ENCODE measurements at regions of chr1 and their contacts with region 1.

Region 1: GRCh38 chr1:229258031-229258756 is 12.7 kb upstream of the RAB4A start:
- DNase-seq: peak; percentile 69 to 85 (median 79)
- H3K4me3 ChIP-seq: peak overlapping the region in 4 of 7 experiments; percentile 5 to 56 (median 23)
- H3K27ac ChIP-seq: no peak overlapping the region
- H3K4me1 ChIP-seq: peaks cover 11 to 20% (median 19%) of the 10 kb centered on the region in 4 experiments
- H3K27me3 ChIP-seq: no peaks in the 10 kb centered on the region

Region 2: GRCh38 chr1:228691926-228692325 is 566.3 kb before region 1 on chr1:
- CTCF ChIA-PET with region 1: interaction called, 23 read pairs
- POLR2A ChIA-PET with region 1: no interaction called
- DNase-seq: peak; percentile 68 to 79 (median 78)
- H3K4me3 ChIP-seq: no peak overlapping the region
- H3K27ac ChIP-seq: no peak overlapping the region
- H3K4me1 ChIP-seq: peaks cover 0 to 2% (median 0%) of the 10 kb centered on the region in 4 experiments
- H3K27me3 ChIP-seq: peaks cover 0 to 6% (median 0%) of the 10 kb centered on the region in 5 experiments

Region 3: DNA sequence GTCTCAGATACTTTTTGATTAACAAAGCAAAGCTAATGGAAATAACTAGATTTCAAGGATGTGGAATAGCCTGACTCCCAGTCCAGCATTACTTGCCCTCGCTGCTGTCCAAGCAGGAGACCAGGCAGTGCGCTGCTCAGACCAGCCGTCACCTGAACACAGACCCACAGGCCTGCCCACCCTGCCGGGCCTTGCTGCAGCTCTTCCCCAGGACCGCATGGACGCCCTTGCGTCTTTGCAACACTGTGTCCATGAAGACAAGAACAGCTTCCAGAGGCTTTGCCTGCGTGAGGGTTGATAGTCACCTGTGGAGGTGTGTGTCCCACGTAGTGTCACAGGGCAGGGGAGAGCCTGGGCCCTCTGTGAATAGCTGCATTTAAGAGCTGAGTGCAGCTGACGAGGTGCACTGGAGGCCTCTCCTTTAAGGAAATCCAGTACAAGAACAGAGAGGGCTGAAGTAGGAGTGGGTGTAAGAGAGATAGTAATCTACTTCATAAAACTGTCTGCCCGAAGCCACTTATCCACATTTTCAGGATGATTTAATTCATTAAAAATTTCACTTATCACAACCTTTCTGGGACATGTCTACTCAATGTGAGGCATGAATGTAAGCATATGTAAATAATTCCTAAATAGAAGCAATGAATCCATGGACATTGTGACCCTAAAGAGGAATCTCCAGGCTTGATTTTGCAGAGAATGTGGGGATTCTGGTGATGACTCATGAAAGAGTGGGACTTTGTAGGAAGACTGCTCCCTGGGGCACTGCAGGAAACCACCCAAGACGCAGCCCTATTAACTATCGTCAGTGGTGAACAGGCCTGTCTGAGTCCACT is 163.5 kb before region 1 on chr1:
- CTCF ChIA-PET with region 1: no interaction called
- POLR2A ChIA-PET with region 1: no interaction called
- DNase-seq: no peak
- H3K4me3 ChIP-seq: no peak overlapping the region
- H3K27ac ChIP-seq: no peak overlapping the region
- H3K4me1 ChIP-seq: no peaks in the 10 kb centered on the region
- H3K27me3 ChIP-seq: peaks cover 0 to 2% (median 0%) of the 10 kb centered on the region in 5 experiments

Region 4: DNA sequence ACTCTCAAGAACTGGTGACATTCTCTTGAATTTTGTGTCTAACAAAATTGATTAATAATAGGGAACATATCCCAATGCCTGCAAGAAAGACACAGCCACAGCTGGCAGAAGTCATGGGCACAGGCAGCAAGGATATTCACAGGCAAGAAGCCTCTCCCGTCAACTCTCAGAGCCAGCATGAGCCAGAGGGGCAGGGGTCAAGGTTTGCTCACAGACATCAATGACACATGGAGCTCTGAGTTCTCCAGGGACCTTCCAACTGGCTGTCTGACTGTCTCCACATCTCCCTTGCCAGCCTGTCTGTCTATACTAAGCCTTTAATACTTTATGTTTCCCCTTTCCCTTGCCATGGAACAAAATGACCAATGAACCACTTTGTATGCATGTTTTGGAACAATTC is 88.8 kb before region 1 on chr1:
- CTCF ChIA-PET with region 1: no interaction called
- POLR2A ChIA-PET with region 1: no interaction called
- DNase-seq: no peak
- H3K4me3 ChIP-seq: no peak overlapping the region
- H3K27ac ChIP-seq: no peak overlapping the region
- H3K4me1 ChIP-seq: peaks cover 0 to 1% (median 0%) of the 10 kb centered on the region in 4 experiments
- H3K27me3 ChIP-seq: no peaks in the 10 kb centered on the region

Region 5: GRCh38 chr1:229227298-229227919 is 30.8 kb before region 1 on chr1:
- CTCF ChIA-PET with region 1: interaction called, 11 read pairs
- POLR2A ChIA-PET with region 1: no interaction called
- DNase-seq: peak; percentile 71 to 83 (median 80)
- H3K4me3 ChIP-seq: no peak overlapping the region
- H3K27ac ChIP-seq: no peak overlapping the region
- H3K4me1 ChIP-seq: peaks cover 9 to 26% (median 23%) of the 10 kb centered on the region in 4 experiments
- H3K27me3 ChIP-seq: peaks cover 0 to 6% (median 0%) of the 10 kb centered on the region in 5 experiments

Region 6: DNA sequence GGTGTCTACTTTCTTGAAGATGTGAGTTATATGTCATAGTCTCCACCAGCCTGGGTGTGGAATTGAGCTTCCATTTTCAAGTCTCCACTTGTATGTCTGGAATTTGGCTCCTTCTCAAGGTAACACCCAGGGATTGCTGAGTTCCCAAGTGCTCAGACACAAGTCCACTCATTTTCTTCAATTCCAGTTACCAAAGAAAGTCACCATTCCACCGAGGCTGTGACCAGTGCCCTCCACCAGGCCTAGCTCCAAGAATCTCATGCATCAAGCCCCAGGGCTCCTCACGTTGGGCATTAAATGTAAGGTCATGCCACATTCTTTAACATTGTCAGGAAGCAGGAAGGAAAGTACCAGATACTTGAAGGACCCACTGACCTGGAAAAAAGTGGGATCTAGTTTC is 10.3 kb after region 1 on chr1:
- CTCF ChIA-PET with region 1: interaction called, 11 read pairs
- POLR2A ChIA-PET with region 1: no interaction called
- DNase-seq: no peak
- H3K4me3 ChIP-seq: no peak overlapping the region
- H3K27ac ChIP-seq: no peak overlapping the region
- H3K4me1 ChIP-seq: peaks cover 16 to 22% (median 19%) of the 10 kb centered on the region in 4 experiments
- H3K27me3 ChIP-seq: no peaks in the 10 kb centered on the region

Region 7: DNA sequence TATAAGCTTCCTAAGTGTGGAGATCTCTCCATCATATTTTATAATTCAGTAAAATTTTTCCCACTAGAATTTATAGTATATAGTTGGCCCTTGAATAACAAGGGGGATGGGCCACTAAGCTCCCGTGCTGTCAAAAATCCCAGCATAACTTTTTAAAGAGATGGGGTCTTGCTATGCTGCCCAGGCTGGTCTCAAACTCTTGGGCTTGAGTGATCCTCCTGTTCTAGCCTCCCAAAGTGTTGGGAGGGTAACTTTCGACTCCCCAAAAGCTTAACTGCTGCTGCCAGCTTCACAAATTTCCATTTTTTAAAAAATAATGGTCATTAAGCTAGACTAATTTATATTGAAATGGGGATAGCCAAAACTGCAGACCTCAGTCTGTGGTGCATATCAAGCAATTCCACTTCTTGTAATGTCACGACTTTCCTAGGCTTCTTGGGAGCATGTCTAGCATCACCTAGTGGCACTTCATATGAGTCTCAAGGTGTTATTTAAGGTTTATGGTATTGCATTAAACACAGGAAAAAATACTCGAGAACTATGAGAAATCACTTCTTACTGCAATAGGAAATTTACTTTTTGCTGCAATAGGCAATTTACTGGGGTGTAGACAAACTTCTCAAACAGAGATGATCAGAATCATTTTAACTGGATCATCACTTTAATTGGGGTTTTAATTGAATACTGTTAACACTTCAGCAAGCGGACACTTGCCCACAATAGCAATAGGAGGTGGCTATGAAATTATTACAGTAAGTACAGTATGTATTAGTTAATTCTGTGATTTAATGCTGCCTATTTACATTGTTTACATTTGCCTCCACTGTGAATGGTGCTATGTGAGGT is 195.0 kb after region 1 on chr1:
- CTCF ChIA-PET with region 1: interaction called, 30 read pairs
- POLR2A ChIA-PET with region 1: no interaction called
- DNase-seq: peak; percentile 31 to 55 (median 53)
- H3K4me3 ChIP-seq: no peak overlapping the region
- H3K27ac ChIP-seq: no peak overlapping the region
- H3K4me1 ChIP-seq: no peaks in the 10 kb centered on the region
- H3K27me3 ChIP-seq: no peaks in the 10 kb centered on the region

Region 8: DNA sequence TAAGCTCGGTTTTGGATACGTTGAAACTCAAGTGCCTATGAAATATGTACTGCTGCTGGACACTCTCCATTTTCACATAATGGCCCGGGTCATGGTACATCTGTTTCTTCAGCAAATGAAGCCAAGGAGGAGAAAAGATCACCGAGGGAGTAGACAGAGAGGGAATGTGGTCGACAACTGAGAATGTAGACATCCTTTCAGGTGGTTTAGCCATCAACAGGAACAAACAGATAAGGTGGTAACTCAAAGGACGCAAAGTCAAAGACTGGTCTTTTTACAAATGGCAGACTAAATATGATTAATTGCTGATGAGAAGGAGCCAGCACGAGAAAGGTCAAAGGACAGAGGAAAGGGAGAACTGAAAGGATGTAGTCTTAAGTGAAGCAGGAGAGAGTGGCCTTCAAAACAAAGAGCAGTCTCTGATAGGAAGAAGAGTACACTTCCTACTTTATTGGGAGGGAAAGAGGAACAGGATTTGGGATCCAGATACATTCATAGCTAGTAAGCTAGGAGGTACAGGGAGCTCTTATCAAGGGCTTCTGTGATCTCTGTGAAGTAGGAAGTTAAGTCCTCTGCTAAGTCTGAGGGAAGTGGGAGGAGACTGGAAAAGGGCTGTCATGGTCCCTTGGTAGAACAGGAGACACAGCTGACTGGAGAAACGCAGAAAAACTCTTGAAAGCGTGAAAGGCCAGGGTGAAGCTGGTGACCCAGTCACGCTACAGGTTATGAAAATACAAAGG is 221.6 kb after region 1 on chr1:
- CTCF ChIA-PET with region 1: interaction called, 130 read pairs
- POLR2A ChIA-PET with region 1: interaction called, 6 read pairs
- DNase-seq: peak; percentile 6 to 16 (median 9)
- H3K4me3 ChIP-seq: no peak overlapping the region
- H3K27ac ChIP-seq: no peak overlapping the region
- H3K4me1 ChIP-seq: peaks cover 0 to 2% (median 0%) of the 10 kb centered on the region in 4 experiments
- H3K27me3 ChIP-seq: no peaks in the 10 kb centered on the region